ENCODE measurements at regions of chr17 and their contacts with region 1.

Region 1: GRCh38 chr17:35612924-35613521 is 25.9 kb downstream of the AP2B1 start:
- DNase-seq: peak; percentile 46
- ATAC-seq: 0 out of 2 replicates have a peak, but pooled peaks have one; percentile 36
- H3K4me3 Mint-ChIP-seq: no peak overlapping the region
- H3K27ac Mint-ChIP-seq: no peak overlapping the region
- H3K4me1 Mint-ChIP-seq: no peaks in the 10 kb centered on the region
- H3K27me3 Mint-ChIP-seq: no peaks in the 10 kb centered on the region
- CTCF ChIP-seq: no peak

Region 2: DNA sequence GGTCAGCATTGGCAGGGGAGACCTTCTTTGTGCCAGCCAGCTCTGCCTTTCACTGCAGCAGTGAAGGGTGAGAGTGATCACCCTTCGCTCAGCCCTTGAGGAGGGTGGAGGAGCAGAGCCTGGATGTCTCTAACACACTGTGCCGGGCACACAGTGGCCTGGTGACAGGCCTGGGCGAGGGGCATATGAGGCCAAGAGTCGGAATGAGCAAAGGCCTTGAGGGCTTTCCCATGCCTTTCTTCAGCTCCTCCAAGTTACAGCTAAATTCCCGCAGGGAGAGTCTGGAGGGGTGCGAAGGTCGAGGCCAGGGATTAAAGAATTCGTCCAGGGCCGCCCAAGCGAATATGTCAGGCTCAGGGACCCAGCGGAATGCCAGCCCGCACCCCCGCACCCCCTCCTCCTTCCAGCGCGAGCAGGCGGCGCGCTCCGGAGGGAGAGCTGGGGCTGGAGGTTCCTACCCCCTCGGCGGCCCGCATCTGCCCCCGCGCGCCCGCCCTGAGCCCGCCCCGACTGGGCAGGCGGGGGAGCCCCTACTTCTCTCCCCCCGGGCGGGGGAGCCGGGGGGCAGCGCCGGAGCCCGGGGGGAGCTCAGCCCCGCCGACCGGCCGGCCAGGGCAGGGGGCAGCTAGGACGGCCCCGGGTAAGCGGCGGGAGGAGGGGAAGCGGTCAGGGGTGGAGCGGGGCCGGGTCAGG is 118.4 kb after region 1 on chr17 and contains the start of gene RASL10B:
- CTCF ChIA-PET with region 1: interaction called, 17 read pairs
- POLR2A ChIA-PET with region 1: interaction called, 4 read pairs
- DNase-seq: peak; percentile 80
- ATAC-seq: peak; percentile 75
- H3K4me3 Mint-ChIP-seq: peak within 1 kb of the TSS; percentile 85
- H3K27ac Mint-ChIP-seq: no peak within 1 kb of the TSS
- H3K4me1 Mint-ChIP-seq: peaks cover 39% of the 10 kb centered on the region
- H3K27me3 Mint-ChIP-seq: peaks cover 16% of the 10 kb centered on the region
- CTCF ChIP-seq: no peak
- total RNA-seq, gene RASL10B: 17.4 to 25.4 TPM (median 25.3 TPM) in 3 replicates